ENCODE measurements at regions of chr21 and their contacts with region 1.

Region 1: GRCh38 chr21:46228345-46229051 is at the start of gene LSS:
- DNase-seq: peak; percentile 83 to 97
- H3K4me3 ChIP-seq: peak within 1 kb of the TSS; percentile 71
- H3K27ac ChIP-seq: no peak within 1 kb of the TSS
- H3K4me1 ChIP-seq: peaks cover 28% of the 10 kb centered on the region
- H3K27me3 ChIP-seq: no peaks in the 10 kb centered on the region
- CTCF ChIP-seq: no peak
- total RNA-seq, gene LSS: 69.0 and 92.3 TPM in 2 replicates

Region 2: GRCh38 chr21:45981151-45982089 is 247.1 kb before region 1 on chr21 and contains the start of gene COL6A1:
- CTCF ChIA-PET with region 1: no interaction called
- POLR2A ChIA-PET with region 1: no interaction called
- intact Hi-C with region 1: loop called (anchors 5 kb)
- DNase-seq: peak; percentile 65 to 66
- H3K4me3 ChIP-seq: peak within 1 kb of the TSS; percentile 79
- H3K27ac ChIP-seq: peak within 1 kb of the TSS; percentile 14; the same call in 1 of the 2 replicates
- H3K4me1 ChIP-seq: peaks cover 4% of the 10 kb centered on the region; the same call in 1 of the 2 replicates
- H3K27me3 ChIP-seq: no peaks in the 10 kb centered on the region
- CTCF ChIP-seq: no peak; the same call in 1 of the 2 replicates
- total RNA-seq, gene COL6A1: 43.1 and 51.8 TPM in 2 replicates

Region 3: DNA sequence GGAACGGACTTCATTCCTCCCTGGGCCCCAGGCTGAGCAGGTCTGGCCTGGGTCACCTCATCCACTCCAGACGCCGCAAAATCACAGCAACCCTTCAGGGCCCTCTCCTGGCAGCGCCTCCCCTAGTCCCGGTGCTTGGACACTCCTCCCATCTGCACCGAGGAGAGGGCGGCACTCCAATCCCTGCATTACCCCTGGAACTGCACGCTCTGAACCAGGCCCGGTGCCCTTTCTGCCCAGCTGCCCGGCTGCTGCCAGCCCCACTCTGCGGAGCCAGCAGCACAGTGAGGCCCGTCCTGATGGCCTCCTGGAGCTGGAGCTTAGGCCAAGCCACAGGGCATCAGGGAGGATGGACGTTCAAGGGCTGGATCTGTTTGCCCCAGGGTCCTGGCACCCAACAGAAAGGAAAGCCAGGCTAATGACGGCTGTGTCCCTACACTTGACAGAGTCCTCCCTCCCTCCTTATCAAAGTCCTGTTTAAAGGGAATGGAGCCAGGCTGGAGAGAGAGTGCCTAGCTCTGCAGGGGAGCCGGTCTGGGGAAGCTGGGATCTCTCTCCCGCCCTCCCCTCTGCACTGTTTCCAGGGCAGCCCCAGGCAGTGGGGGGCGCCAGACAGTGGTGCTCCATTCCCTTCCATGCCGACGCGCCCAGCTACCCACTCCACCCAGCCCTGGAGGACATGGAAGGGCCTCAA is 117.9 kb before region 1 on chr21:
- CTCF ChIA-PET with region 1: no interaction called
- POLR2A ChIA-PET with region 1: no interaction called
- intact Hi-C with region 1: no loop called
- DNase-seq: no peak
- H3K4me3 ChIP-seq: no peak overlapping the region
- H3K27ac ChIP-seq: no peak overlapping the region
- H3K4me1 ChIP-seq: no peaks in the 10 kb centered on the region
- H3K27me3 ChIP-seq: no peaks in the 10 kb centered on the region
- CTCF ChIP-seq: no peak

Region 4: GRCh38 chr21:46183910-46184624 is 44.4 kb before region 1 on chr21 and contains the start of gene SPATC1L:
- CTCF ChIA-PET with region 1: no interaction called
- POLR2A ChIA-PET with region 1: no interaction called
- intact Hi-C with region 1: loop called (anchors 1 kb)
- DNase-seq: peak in 1 of 2 experiments; percentile 40
- H3K4me3 ChIP-seq: peak within 1 kb of the TSS; percentile 73
- H3K27ac ChIP-seq: no peak within 1 kb of the TSS
- H3K4me1 ChIP-seq: peaks cover 12% of the 10 kb centered on the region
- H3K27me3 ChIP-seq: no peaks in the 10 kb centered on the region
- CTCF ChIP-seq: no peak
- total RNA-seq, gene SPATC1L: 31.8 and 32.7 TPM in 2 replicates

Region 5: DNA sequence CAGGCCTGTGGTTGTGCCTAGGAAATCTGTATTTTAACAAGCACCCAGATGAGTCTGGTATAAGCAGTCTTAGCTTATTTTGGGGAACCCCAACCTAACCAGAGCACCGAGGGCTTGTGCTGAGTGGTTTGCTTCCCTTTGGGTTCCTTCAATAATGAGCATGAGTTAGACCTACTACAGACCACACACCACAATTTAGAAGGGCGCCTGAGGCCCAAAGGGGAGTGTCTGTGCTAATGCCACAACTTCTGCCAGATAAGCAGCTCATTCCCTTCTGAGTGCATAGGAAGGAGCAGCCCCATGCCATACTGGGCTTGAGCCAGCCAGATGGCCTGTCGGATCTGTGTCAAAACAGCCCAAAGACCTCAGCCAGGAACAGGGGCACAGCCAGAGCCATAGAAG is 15.5 kb after region 1 on chr21:
- CTCF ChIA-PET with region 1: no interaction called
- POLR2A ChIA-PET with region 1: interaction called, 11 read pairs
- intact Hi-C with region 1: no loop called
- DNase-seq: no peak
- H3K4me3 ChIP-seq: no peak overlapping the region
- H3K27ac ChIP-seq: no peak overlapping the region
- H3K4me1 ChIP-seq: no peaks in the 10 kb centered on the region
- H3K27me3 ChIP-seq: no peaks in the 10 kb centered on the region
- CTCF ChIP-seq: no peak

Measured in PC-9 (cell line).